Sigmoid colon (tissue), 7 donors: ENCODE measurements at regions of chr1 and their contacts with region 1.

Region 1: DNA sequence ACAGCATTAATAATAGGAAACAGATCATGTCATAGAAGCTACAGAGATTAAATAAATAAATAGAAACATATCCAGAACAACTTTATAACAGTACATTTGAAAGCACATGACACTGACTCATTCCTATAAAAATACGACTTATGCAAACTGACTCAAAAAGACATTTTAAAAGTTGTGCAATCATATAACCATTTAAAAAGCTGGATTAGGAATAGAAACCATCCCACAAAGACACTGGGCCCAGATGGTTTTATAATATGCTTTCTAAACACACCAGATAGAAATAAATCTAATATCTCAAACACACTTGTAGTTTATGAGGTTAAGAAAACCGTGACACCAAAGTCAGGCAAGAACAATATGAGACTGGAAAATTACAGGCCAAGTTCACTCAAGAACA is 47.6 kb downstream of the MATN1 start:
- DNase-seq: no peak
- H3K4me3 ChIP-seq: no peak overlapping the region
- H3K27ac ChIP-seq: peak overlapping the region in 3 of 4 donors; percentile 59 to 69 (median 61)
- H3K4me1 ChIP-seq: peaks cover 4 to 33% (median 20%) of the 10 kb centered on the region in 4 donors
- H3K27me3 ChIP-seq: no peaks in the 10 kb centered on the region
- CTCF ChIP-seq: no peak
- EP300 ChIP-seq: peak in 3 of 4 donors; percentile 43 to 83 (median 58)
- POLR2A ChIP-seq: no peak

Region 2: DNA sequence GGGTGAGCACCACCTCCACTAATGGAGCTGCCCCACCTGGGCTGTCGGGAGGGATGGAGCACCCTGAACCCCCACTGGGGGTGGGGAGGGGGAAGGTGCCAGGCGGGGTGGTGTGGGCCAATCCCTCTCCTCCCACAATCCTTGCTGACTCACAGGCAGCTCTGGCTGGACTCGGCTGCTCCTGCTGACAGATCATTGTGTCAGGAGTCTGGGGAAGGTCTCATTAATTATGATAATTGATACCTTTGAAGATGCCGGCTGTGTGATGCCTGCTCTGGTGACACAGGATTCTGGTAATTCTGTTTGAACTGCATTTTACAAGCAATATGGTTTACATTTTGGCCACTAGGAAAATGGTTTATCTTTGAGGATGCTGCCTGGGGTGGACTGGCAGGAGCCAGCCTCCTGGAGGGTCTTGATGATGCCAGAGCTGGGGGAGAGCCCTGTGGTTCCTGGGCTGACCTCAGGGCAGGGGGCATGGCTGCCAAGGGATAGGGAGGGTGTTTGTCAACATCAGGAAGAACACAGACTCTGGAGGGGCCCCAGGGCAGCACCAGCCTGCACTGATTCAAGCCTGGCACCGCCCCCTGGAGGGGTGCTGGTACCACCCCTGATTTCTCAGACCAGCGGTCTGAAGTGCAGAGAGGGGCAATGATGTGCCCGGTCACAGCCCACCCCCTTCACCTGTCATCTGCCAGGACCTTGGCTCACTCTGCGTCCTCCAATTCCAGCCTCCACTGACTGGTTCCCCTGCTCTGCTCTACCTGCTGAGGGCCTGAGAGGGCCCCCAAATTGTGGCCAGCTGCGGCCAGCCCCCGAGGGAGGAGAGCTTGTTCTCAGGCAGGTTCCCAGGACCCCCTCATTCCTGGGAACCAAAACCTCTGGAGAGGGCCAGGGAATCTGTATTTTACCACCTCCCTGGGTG is 291.2 kb before region 1 on chr1:
- intact Hi-C with region 1: no loop called
- DNase-seq: peak; percentile 45
- H3K4me3 ChIP-seq: no peak overlapping the region
- H3K27ac ChIP-seq: no peak overlapping the region
- H3K4me1 ChIP-seq: peaks cover 0 to 8% (median 7%) of the 10 kb centered on the region in 4 donors
- H3K27me3 ChIP-seq: peaks cover 0 to 22% (median 0%) of the 10 kb centered on the region in 3 donors
- CTCF ChIP-seq: no peak
- EP300 ChIP-seq: no peak
- POLR2A ChIP-seq: no peak

Region 3: DNA sequence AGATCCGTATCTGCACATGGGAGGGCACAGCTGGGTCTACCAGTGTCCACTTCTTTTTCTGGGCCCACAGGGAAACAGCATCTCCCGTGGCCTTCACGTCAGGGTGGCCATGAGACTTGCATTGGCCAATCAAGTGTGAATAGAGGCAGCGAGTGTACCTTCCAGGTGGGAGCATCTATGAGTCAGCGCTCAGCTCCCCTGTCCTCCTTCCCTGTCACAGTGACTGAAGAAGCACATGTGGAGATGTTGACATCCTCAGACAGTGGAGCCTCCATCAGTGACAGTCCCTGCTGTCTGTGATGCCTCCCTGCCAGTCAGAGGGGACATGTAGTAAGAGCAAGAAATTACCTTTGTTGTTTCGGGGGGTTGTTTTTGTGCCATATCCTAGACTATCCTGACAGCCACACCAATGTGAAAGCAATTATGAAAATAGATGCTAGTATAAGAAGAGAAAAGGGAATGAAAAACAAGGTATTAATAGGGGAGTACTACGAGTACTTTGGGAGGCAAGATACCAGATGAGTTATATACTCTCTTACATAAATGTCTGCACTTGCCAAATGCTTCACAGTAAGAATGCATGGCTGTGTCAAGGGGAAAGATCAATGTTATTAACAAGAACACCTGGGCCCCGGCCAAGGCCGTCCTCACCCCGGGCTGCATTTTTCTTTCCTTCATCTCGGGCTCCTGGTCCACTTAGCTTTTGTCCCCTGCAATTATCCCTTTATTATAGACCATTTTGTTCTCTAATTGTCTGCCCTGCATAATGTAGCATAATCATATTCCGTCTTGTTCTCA is 38.4 kb before region 1 on chr1:
- intact Hi-C with region 1: loop called (anchors 5 kb)
- DNase-seq: peak; percentile 69
- H3K4me3 ChIP-seq: no peak overlapping the region
- H3K27ac ChIP-seq: peak overlapping the region in 3 of 4 donors; percentile 41 to 66 (median 54)
- H3K4me1 ChIP-seq: peaks cover 0 to 24% (median 18%) of the 10 kb centered on the region in 4 donors
- H3K27me3 ChIP-seq: no peaks in the 10 kb centered on the region
- CTCF ChIP-seq: no peak
- EP300 ChIP-seq: peak in 3 of 4 donors; percentile 24 to 39 (median 24)
- POLR2A ChIP-seq: no peak

Region 4: DNA sequence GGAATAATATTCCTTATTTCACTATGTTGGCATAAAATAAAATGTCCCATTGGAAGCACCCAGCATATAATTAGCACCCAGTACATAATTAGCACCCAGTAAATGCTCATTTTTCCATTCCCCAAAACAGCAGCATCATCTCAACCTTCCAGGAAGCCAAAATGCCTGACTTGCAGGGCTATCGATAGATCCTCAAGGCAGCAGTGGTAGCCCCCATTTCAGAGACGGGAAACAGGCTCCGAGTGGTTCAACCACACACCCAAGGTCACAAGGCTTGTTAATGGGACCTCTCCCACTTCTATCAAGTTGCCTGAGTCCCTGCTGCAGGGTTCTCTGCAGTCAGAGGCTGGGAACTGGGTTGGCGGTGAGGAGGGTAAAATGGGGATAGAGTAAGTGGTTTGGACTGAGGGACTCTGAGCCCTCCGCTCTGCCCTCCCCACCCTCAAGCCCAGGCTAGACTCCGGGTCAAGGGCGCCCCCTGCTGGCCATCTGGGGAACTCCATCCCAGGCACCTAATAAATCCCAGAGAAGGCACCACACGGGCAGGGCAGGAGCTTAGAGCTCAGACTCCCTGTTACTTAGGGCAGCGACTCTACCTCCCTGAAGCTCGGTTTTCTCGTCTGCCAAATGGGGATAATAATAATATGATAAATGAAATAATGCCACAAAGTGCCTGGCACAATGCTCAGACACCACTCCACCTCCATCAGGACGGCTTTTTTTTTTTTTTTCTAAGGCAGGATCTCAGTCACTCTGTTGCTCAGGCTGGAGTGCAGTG is 103.7 kb after region 1 on chr1:
- intact Hi-C with region 1: no loop called
- DNase-seq: peak; percentile 91
- H3K4me3 ChIP-seq: no peak overlapping the region
- H3K27ac ChIP-seq: no peak overlapping the region
- H3K4me1 ChIP-seq: peaks cover 0 to 7% (median 0%) of the 10 kb centered on the region in 4 donors
- H3K27me3 ChIP-seq: no peaks in the 10 kb centered on the region
- CTCF ChIP-seq: peak; percentile 89 to 99 (median 96)
- EP300 ChIP-seq: no peak
- POLR2A ChIP-seq: no peak

Region 5: DNA sequence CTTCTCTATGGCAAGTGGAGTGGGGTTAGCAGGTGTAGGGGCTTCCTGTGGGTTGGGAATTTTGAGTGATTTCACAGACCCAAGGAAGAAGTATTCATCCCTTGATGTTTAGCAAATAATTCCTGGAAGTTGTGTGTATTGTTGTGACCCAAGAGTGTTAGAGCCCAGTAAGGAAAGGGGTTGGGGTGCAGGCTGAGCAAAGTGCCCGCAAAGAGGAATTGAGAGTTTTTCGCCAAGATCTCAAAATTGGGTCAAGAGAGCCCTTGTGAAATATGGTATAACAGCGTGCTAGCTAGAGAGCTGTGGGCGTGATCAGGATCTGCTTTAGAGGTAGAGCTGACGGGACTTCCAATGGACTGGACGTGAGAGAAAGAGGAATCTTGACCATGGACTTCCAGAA is 154.8 kb after region 1 on chr1:
- intact Hi-C with region 1: no loop called
- DNase-seq: no peak
- H3K4me3 ChIP-seq: no peak overlapping the region
- H3K27ac ChIP-seq: no peak overlapping the region
- H3K4me1 ChIP-seq: peaks cover 0 to 20% (median 5%) of the 10 kb centered on the region in 4 donors
- H3K27me3 ChIP-seq: no peaks in the 10 kb centered on the region
- CTCF ChIP-seq: no peak
- EP300 ChIP-seq: no peak
- POLR2A ChIP-seq: no peak

Region 6: GRCh38 chr1:30888391-30888790 is 212.6 kb after region 1 on chr1:
- intact Hi-C with region 1: no loop called
- DNase-seq: peak; percentile 96
- H3K4me3 ChIP-seq: no peak overlapping the region
- H3K27ac ChIP-seq: peak overlapping the region; percentile 92 to 95 (median 94)
- H3K4me1 ChIP-seq: peaks cover 0 to 100% (median 92%) of the 10 kb centered on the region in 4 donors
- H3K27me3 ChIP-seq: no peaks in the 10 kb centered on the region
- CTCF ChIP-seq: no peak
- EP300 ChIP-seq: no peak
- POLR2A ChIP-seq: peak in 1 of 2 donors; percentile 19